HepG2 (cell line): ENCODE measurements at regions of chr9 and their contacts with region 1.

Region 1: GRCh38 chr9:34010979-34011378 is 37.7 kb downstream of the UBAP2 start:
- DNase-seq: peak; percentile 3
- ATAC-seq: no peak
- H3K4me3 ChIP-seq: no peak overlapping the region
- H3K27ac ChIP-seq: no peak overlapping the region
- H3K4me1 ChIP-seq: no peaks in the 10 kb centered on the region
- H3K27me3 ChIP-seq: no peaks in the 10 kb centered on the region
- CTCF ChIP-seq: no peak
- EP300 ChIP-seq: no peak
- POLR2A ChIP-seq: no peak
- RAD21 ChIP-seq: no peak

Region 2: DNA sequence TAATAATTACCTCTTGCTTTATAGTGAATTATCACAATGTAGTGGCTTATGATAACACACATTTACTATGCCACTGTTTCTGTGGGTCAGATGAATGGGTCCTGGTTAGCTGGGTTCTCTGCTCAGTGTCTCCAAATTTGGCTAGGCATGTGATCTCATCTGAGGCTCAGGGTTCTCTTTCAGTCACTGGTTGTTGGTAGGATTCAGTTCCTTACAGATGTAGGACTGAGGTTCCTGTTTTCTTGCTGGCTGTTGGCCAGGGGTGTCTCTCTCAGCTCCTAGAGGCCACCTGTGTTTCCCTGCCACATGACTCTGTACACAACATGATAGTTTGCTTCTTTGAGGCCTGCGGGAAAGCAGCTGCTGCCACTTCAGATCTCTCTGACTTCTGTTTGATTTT is 713.5 kb before region 1 on chr9:
- CTCF ChIA-PET with region 1: no interaction called
- POLR2A ChIA-PET with region 1: no interaction called
- in situ Hi-C with region 1: no loop called
- intact Hi-C with region 1: no loop called
- DNase-seq: no peak
- ATAC-seq: no peak; the same call in 2 of the 3 replicates
- H3K4me3 ChIP-seq: no peak overlapping the region
- H3K27ac ChIP-seq: peak overlapping the region; percentile 20
- H3K4me1 ChIP-seq: peaks cover 85% of the 10 kb centered on the region
- H3K27me3 ChIP-seq: no peaks in the 10 kb centered on the region
- CTCF ChIP-seq: no peak
- EP300 ChIP-seq: no peak
- POLR2A ChIP-seq: no peak
- RAD21 ChIP-seq: no peak

Region 3: GRCh38 chr9:33942471-33943083 is 68.4 kb before region 1 on chr9:
- CTCF ChIA-PET with region 1: no interaction called
- POLR2A ChIA-PET with region 1: no interaction called
- in situ Hi-C with region 1: no loop called
- intact Hi-C with region 1: loop called (anchors 10 kb)
- DNase-seq: peak; percentile 64
- ATAC-seq: peak; percentile 34; the same call in 1 of the 3 replicates
- H3K4me3 ChIP-seq: no peak overlapping the region
- H3K27ac ChIP-seq: peak overlapping the region; percentile 99
- H3K4me1 ChIP-seq: peaks cover 63% of the 10 kb centered on the region
- H3K27me3 ChIP-seq: no peaks in the 10 kb centered on the region
- CTCF ChIP-seq: no peak
- EP300 ChIP-seq: no peak
- POLR2A ChIP-seq: no peak
- RAD21 ChIP-seq: no peak